GM23248 (cell line): ENCODE measurements at regions of chr12 and their contacts with region 1.

Region 1: GRCh38 chr12:20601668-20602280 is 93.4 kb upstream of the SLCO1C1 start:
- DNase-seq: peak; percentile 61
- H3K4me3 ChIP-seq: no peak overlapping the region
- H3K27ac ChIP-seq: no peak overlapping the region
- H3K4me1 ChIP-seq: peaks cover 24% of the 10 kb centered on the region
- H3K27me3 ChIP-seq: no peaks in the 10 kb centered on the region

Region 2: GRCh38 chr12:19757317-19757877 is 844.4 kb before region 1 on chr12:
- in situ Hi-C with region 1: loop called (anchors 25 kb)
- DNase-seq: peak; percentile 69
- H3K4me3 ChIP-seq: no peak overlapping the region
- H3K27ac ChIP-seq: no peak overlapping the region
- H3K4me1 ChIP-seq: peaks cover 21% of the 10 kb centered on the region
- H3K27me3 ChIP-seq: no peaks in the 10 kb centered on the region